ENCODE measurements at regions of chr1 and their contacts with region 1.

Region 1: DNA sequence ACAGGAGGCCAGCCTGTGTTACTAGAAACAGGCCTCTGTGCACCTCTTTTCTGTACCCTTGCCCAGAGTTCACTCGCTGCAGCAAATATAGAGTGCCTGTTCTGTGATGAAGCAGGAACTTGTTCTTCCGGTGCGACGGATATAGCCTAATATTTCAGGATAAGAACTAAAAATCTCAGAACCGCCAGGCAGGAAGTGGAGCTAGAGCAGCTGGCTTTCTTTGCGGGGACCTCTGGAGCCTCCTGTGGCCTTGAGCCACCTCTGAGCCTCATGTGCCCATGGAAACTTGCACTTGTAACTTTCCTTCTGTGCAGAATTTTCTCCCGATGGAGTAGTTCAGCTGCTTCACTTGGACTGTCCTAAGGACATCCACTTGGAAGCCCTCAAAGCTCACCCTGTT is 44.5 kb upstream of the VAMP3 start:
- DNase-seq: no peak
- H3K4me3 ChIP-seq: no peak overlapping the region
- H3K27ac ChIP-seq: no peak overlapping the region
- H3K4me1 ChIP-seq: no peaks in the 10 kb centered on the region
- H3K27me3 ChIP-seq: no peaks in the 10 kb centered on the region
- CTCF ChIP-seq: no peak
- POLR2A ChIP-seq: no peak

Region 2: DNA sequence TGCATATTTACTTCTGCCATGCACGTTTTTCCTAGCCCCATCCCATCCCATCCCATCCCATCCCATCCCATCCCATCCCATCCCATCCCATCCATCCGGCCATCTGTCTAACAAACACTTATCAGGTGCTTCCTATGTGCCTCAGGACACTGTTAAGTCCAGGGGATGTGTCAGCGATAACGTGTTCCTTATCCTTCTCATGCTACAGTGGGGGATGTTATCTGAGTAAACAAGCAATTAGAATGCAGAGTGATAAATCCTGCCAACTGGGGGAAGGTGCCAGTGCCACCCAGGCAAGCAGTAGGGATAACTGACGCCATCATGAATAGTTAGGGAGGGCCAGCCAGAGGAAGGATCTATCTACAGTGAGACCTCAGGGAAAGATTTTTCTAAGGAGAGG is 637.1 kb before region 1 on chr1:
- intact Hi-C with region 1: loop called (anchors 5 kb)
- DNase-seq: no peak
- H3K4me3 ChIP-seq: no peak overlapping the region
- H3K27ac ChIP-seq: no peak overlapping the region
- H3K4me1 ChIP-seq: no peaks in the 10 kb centered on the region
- H3K27me3 ChIP-seq: no peaks in the 10 kb centered on the region
- CTCF ChIP-seq: no peak
- POLR2A ChIP-seq: no peak